Head of caudate nucleus (tissue), 42 donors: ENCODE measurements at regions of chr3 and their contacts with region 1.

Region 1: DNA sequence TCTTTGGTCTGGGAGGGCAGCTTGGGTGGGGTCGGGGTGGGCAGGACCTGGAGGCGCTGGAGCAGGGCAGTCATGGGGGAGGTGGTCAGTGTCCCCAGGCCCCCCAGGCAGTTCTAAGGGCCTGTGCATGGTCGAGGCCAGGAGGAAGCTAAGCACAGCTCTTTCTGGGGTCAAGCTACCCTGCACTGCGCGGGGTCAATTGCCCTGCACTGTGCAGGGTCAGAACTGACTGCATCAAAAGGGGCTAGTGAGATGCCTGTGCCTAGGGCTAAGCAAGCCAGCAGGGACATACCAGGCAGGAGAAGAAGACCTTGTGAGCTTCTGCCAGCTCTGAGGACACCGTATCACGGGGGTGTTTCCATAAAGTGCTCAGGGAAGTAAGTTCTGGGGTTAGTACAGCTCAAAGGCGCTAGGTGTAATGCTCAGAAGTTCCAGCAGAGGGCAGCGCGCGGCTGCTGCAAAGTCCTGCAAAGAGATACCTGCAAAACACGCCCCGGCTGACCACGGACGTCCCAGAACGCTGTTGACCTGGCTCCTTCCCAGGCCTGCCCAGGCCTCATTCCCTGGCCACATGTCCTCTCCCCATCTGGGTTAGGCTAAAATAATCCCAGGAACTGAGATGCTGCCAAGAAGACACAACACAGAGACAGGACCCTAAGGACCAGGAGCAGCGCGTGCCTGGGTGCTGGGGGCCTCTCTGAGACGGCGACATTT is 18.8 kb upstream of the IQSEC1 start:
- DNase-seq: peak; percentile 50 to 95 (median 88)

Region 2: GRCh38 chr3:12969486-12969885 is 122.6 kb before region 1 on chr3:
- intact Hi-C with region 1: no loop called
- DNase-seq: peak in 6 of 42 donors; percentile 36 to 57 (median 46)

Region 3: DNA sequence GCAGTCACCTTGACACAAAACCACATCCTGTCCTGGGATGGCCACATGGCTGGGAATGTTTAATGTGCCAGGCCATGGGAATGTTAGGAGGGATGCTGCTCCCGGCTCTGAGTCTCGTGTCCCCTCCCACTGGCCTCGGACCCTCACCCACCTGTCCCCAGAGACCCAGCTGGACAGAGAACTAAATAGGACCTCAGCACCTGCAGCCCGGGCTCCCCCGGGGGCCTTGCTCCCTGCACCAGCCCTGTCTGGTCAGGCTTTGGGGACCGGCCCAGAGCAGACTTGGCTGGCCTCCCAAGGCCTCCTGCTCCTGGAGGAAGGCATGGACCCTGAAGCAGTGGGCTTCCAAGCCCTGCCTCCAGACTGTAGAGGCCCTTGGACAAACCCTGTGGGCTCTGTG is 81.1 kb after region 1 on chr3:
- intact Hi-C with region 1: no loop called
- DNase-seq: peak in 1 of 42 donors; percentile 10

Region 4: DNA sequence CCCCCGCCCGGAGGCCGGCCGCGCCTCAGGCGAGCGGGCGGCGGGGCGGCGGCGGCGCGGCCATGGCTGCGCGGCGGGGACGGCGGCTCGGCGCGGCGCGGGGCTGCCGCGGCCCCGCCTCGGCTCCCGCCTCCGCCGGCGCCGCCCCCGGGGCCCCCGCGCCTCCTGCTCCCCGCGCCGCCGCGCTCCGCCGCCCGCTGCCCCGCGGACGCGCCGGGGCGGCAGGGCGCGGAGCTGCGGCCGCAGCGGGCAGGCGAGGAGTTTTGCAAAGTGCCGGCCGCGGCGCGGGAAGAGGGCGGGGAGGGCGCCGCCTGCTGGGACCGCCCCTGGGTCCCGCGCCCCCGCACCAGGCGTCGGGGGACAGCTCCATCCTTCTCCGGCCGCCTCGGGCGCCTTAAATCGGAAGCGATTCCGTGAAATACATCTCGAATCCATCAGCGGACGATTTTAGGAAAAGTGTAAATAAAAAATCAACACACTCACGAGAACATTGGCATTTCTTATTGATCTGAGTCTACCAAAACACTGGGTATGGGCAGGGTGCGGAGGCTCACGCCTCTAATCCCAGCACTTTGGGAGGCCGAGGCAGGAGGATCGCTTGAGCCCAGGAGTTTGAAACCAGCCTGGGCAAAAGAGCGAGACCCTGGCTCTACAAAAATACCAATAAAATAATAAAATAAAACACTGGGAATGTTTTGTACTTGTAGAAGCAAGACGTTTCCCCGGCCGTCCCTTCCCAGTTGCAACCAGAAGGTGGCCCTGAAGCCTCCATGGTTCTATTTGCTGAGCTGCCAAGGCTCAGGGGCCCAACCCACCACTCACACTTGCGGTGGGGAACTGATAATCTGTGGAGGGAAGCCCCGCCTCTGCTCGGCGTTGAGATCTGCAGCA is 191.2 kb after region 1 on chr3:
- intact Hi-C with region 1: loop called (anchors 10 kb)
- DNase-seq: peak in 18 of 42 donors; percentile 33 to 76 (median 54)

Region 5: GRCh38 chr3:13461169-13462158 is 369.4 kb after region 1 on chr3:
- intact Hi-C with region 1: loop called (anchors 10 kb)
- DNase-seq: peak in 28 of 42 donors; percentile 25 to 75 (median 50)

Region 6: DNA sequence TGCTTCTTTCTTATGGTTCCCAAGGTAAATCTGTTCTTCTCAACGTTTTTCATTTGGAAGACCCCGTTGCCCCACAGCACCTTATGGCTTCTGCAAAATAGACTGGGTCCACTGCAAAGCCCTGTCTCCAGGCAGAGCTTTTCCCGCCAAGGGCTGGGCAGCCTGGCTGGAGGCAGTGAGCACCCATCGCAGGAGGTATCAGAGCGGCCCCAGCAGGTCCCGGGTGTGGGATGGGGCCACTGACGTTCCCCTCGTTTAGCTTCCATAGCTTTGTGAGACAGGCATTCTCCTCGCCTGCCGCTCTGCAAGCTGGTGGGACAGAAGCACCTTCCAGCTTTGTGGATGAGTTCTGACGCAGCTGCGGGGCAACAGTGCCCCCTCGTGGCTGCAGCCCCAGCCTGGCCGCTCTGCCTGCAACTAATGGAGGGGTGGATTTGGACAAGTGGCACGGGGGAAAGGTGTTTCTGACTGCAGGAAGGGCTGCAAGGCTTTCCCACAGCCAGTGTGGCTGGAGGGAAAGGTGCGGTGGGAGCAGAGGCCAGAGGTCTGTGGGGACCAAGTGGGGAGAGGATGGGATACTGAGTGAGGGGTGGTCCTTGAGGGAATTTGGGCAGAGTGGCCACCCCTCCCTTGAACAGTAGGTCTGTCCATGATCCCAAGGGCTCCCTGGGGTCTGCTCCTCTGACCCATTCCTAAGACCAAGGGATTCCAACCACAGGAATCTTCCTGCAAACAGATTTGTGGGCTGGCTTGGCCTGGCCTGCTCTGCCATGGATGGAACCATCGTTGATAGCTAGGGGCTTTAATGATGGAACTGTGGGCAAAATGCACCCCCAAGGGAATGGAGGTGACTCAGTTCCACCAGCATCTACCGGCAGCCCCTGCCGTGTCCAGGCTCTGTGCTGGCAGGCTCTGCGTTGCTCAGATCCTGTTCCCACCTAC is 556.3 kb after region 1 on chr3:
- intact Hi-C with region 1: loop called (anchors 5 kb)
- DNase-seq: peak; percentile 79 to 96 (median 90)